ENCODE measurements at regions of chr19 and their contacts with region 1.

Region 1: GRCh38 chr19:49443366-49444099 is 2.2 kb upstream of the SLC17A7 start:
- DNase-seq: peak; percentile 97
- ATAC-seq: peak; percentile 87
- H3K4me3 Mint-ChIP-seq: peak overlapping the region; percentile 74
- H3K27ac Mint-ChIP-seq: peak overlapping the region; percentile 83
- H3K4me1 Mint-ChIP-seq: peaks cover 37% of the 10 kb centered on the region
- H3K27me3 Mint-ChIP-seq: peaks cover 37% of the 10 kb centered on the region
- CTCF ChIP-seq: peak; percentile 88

Region 2: GRCh38 chr19:49264258-49264657 is 179.3 kb before region 1 on chr19:
- CTCF ChIA-PET with region 1: no interaction called
- POLR2A ChIA-PET with region 1: no interaction called
- intact Hi-C with region 1: loop called (anchors 10 kb)
- DNase-seq: no peak
- ATAC-seq: no peak
- H3K4me3 Mint-ChIP-seq: no peak overlapping the region
- H3K27ac Mint-ChIP-seq: no peak overlapping the region
- H3K4me1 Mint-ChIP-seq: no peaks in the 10 kb centered on the region
- H3K27me3 Mint-ChIP-seq: peaks cover 12% of the 10 kb centered on the region
- CTCF ChIP-seq: no peak

Region 3: DNA sequence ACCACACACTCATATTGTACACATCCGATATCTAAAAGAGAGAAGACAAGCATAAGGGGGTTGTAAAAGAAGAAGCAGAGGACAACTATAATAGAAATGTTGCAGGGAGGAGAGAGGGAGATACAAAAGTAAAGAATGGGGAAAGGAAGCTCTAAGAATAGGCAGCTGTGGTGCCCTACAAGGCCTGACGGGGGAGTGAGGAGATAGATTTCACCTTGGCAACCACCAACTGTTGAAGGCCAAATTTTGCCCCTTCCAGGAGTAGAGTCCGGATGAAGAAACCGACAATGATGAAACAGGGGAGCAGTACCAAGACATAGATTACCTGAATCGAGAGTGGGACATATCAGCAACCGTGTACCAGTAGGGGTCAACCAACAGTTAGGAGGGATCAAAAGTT is 134.4 kb before region 1 on chr19:
- CTCF ChIA-PET with region 1: no interaction called
- POLR2A ChIA-PET with region 1: no interaction called
- intact Hi-C with region 1: no loop called
- DNase-seq: no peak
- ATAC-seq: no peak
- H3K4me3 Mint-ChIP-seq: no peak overlapping the region
- H3K27ac Mint-ChIP-seq: no peak overlapping the region
- H3K4me1 Mint-ChIP-seq: no peaks in the 10 kb centered on the region
- H3K27me3 Mint-ChIP-seq: no peaks in the 10 kb centered on the region
- CTCF ChIP-seq: no peak

Region 4: GRCh38 chr19:49473868-49474544 is 30.5 kb after region 1 on chr19 and contains the start of gene FLT3LG:
- CTCF ChIA-PET with region 1: interaction called, 27 read pairs
- POLR2A ChIA-PET with region 1: interaction called, 3 read pairs
- intact Hi-C with region 1: no loop called
- DNase-seq: peak; percentile 93
- ATAC-seq: peak; percentile 60
- H3K4me3 Mint-ChIP-seq: peak within 1 kb of the TSS; percentile 89
- H3K27ac Mint-ChIP-seq: peak within 1 kb of the TSS; percentile 92
- H3K4me1 Mint-ChIP-seq: peaks cover 45% of the 10 kb centered on the region
- H3K27me3 Mint-ChIP-seq: no peaks in the 10 kb centered on the region
- CTCF ChIP-seq: peak; percentile 94
- total RNA-seq, gene FLT3LG: 57.7 to 61.2 TPM

Measured in activated CD8-positive, alpha-beta T cell treated with anti-CD3 and anti-CD28 coated beads for 36 hours (primary cell).